ENCODE measurements at regions of chr15 and their contacts with region 1.

Region 1: GRCh38 chr15:90286678-90287077 is 21.2 kb downstream of the NGRN start:
- DNase-seq: peak in 1 of 3 donors; percentile 27
- H3K4me3 ChIP-seq: no peak overlapping the region
- H3K4me3 Mint-ChIP-seq: no peak overlapping the region
- H3K27ac ChIP-seq: no peak overlapping the region
- H3K27ac Mint-ChIP-seq: no peak overlapping the region
- H3K4me1 ChIP-seq: peaks cover 0 to 4% of the 10 kb centered on the region in 2 donors
- H3K4me1 Mint-ChIP-seq: peaks cover 3% of the 10 kb centered on the region
- H3K27me3 ChIP-seq: no peaks in the 10 kb centered on the region
- H3K27me3 Mint-ChIP-seq: peaks cover 0 to 4% (median 0%) of the 10 kb centered on the region in 3 donors
- CTCF ChIP-seq: peak; percentile 57

Region 2: GRCh38 chr15:90143166-90143655 is 143.5 kb before region 1 on chr15:
- intact Hi-C with region 1: loop called in 1 of 2 experiments (anchors 10 kb)
- DNase-seq: peak; percentile 43 to 63 (median 54)
- H3K4me3 ChIP-seq: no peak overlapping the region
- H3K4me3 Mint-ChIP-seq: no peak overlapping the region
- H3K27ac ChIP-seq: no peak overlapping the region
- H3K27ac Mint-ChIP-seq: peak overlapping the region in 3 of 7 donors; percentile 23 to 73 (median 53)
- H3K4me1 ChIP-seq: peaks cover 9 to 18% of the 10 kb centered on the region in 2 donors
- H3K4me1 Mint-ChIP-seq: peaks cover 21% of the 10 kb centered on the region
- H3K27me3 ChIP-seq: no peaks in the 10 kb centered on the region
- H3K27me3 Mint-ChIP-seq: peaks cover 0 to 12% (median 3%) of the 10 kb centered on the region in 3 donors
- CTCF ChIP-seq: peak; percentile 80

Region 3: DNA sequence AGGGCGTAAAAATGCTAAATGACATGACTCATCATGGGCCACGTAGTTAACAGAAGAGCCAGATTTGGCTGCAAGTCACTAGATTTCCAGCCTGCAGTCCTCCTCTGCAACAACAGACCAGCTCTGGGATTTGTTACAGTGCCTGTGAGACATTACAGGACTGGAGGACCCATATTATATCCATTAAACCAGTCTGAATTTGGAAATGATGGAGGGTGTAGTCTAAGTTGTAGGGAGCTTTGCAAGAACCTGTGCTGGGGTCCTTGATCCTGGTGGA is 76.2 kb after region 1 on chr15:
- intact Hi-C with region 1: no loop called
- DNase-seq: peak in 1 of 3 donors; percentile 32
- H3K4me3 ChIP-seq: no peak overlapping the region
- H3K4me3 Mint-ChIP-seq: no peak overlapping the region
- H3K27ac ChIP-seq: no peak overlapping the region
- H3K27ac Mint-ChIP-seq: peak overlapping the region in 1 of 7 donors; percentile 44
- H3K4me1 ChIP-seq: peaks cover 30% of the 10 kb centered on the region in 2 donors
- H3K4me1 Mint-ChIP-seq: peaks cover 34% of the 10 kb centered on the region
- H3K27me3 ChIP-seq: no peaks in the 10 kb centered on the region
- H3K27me3 Mint-ChIP-seq: peaks cover 0 to 2% (median 2%) of the 10 kb centered on the region in 3 donors
- CTCF ChIP-seq: no peak